Right ventricle myocardium inferior (tissue), 1 donor: ENCODE measurements at regions of chr14 and their contacts with region 1.

Region 1: DNA sequence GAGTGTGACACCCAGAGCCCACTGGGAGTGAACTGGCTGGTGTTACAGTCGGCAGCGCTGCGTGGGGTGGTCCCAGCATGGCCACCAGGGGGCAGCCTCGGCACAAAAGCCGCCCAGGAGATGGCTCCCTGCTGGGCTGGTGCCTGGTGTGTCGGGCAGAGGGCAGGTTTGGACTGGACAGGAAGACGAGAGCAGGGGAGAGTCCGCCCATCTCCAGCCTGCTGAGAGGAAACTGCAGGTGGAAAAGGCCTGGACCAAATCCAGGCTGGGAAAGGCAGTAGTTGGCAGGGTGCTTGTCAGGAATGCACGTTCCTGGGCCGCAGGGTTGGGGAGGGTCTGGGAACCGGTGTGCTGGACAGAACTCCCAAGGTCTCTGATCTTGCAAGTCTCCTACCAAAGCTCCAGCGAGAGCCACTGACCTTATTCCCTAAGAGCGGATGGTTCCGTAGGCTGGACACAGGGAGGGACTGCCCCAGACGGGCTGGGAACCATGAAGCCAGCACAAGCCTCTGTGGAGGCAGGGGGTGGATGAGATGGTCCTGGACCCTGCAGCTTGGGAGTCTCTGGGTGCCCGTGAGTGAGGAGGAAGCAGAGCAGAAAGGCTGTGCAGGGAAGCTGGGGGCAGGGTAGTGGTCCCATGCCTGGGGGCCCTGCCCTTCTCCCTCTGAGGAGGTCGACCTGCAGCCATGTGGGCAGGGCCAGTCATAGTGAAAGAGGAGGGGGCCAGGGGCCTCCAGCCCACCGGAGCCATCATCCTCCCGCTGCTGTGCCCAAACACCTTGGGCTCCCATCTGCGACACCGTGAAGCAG is 1.8 kb downstream of the AHNAK2 start:
- DNase-seq: peak; percentile 93
- ATAC-seq: peak; percentile 74

Region 2: DNA sequence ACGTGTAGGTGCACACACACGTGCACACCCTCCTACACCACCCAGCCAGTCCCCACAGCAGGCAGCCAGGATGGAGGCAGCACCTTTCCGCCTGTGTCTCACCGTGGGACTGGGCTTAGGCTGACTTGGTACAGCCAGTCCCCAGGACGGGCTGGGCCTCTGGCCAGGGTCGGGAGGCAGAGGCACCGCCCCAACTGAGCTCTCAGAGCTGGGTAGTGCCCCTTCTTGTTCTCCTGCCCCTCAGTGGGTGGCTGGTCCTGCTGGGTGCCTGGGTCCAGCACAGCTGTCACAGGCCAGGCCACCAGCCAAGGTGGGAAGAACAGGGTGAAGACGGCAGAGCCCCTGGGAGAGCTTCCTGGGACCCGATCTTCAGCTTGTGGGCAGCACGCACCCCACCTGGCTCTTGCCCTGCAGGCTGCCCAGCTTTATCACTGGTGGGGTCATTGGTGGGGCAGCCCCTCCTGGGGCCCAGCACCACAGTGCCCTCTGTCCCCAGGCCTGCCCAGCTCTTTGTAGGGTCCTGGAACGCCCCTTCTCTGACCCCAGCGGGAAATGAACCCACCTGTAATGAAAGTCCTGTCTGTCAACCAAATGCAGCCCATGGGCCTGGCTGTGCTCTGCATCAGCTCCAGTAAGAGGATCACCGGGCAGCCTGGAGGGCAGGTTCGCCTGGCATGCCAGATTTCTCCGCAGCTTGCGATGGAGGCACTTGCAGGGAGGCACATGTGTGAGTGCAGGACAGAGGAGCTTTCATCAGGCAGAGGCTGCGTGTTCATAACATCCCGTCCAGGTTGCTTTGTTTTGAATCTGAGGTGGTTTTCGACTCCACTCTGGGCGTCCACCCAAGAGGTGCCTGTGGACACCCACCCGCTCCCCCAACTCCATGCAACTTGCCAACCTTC is 29.8 kb after region 1 on chr14:
- intact Hi-C with region 1: no loop called
- DNase-seq: peak; percentile 53
- ATAC-seq: no peak

Region 3: DNA sequence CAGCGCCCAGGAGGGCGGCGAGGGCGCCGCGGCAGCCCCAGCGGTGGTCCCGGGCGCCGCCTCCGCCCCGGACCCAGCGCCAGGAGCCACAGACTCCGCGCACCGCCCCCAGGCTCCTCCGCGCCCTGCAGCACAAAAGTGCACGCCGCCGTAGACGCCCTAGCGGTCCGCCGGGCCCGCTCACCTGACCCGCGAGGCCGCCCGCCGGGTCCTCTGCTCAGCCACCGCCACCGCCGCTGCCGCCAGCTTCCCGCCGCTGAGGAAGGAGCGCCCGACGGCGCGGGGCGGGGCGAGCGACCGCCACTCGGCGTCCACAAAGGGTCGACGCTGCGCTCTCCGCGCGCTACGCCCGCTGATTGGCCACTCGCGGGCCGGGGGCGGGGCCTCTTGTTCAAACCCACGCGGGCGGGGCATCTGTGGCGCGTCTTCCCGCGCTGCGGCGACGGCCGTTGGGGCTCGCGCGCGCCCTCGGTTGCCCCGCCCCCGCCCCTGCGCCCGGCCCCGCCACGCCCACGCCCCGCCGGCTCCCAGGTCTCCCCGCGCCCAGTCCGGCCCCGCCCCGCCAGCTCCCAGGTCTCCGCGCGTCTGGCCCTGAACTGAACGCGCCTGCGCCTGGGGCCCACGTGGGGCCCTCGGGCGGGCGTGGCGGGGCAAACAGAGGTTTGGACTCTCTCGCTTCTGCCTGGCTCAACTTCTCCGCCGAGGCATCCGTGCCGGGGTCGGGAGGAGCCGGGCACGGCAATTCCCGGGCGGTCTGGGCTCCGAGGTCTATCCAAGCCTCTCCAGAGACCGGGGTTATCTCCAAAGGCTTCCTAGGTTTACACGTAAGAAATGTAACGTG is 44.6 kb after region 1 on chr14 and contains the start of gene CDCA4:
- intact Hi-C with region 1: loop called (anchors 2 kb)
- DNase-seq: peak; percentile 99
- ATAC-seq: peak; percentile 99
- total RNA-seq, gene CDCA4: 3.1 TPM

Region 4: DNA sequence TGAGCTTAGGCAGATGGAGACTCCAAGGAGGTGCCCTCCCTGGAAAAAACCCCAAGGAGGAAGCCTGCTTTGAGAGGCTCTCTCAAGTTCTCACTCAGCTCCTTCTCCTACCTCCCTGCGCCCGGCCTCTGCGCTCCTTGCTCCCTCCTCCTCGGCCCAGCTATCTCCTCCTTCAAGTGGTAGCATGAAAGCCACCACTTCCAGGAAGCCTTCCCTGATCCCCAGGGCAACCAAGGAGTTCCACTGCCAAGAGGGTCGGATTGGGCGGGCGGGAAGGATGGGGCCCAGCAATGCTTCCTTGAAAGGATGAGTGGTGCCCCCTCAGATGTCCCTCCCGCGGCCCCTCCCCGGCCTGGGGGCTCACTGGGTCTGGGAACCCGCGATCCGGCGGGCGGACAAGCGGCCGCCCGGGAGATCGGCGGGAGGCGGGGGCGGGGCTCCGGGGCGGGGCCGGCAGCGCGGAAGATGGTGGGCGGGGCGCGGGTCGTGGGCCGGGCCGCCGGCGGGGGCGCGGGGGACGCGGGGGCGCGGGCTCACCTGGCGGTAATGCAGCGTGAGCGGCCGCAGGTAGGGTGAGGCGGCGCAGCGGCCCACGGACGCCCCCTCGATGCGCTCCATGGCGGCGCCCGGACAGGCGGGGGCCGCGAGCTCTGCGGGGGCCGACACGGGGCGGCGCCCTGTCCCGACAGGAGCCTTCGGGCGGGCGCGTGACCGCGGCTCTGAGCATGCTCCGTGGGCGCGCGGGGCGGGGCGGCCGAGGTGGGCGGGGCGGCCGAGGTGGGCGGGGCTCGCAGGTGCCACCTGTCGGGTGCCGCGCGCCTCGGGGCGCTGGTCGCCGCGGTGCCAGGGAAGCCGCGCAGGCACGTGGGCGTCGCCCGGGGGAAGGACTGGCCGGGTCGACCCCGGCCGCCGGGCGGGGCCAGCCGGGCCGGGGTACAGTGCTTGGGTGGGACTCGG is 204.5 kb after region 1 on chr14 and contains the start of gene NUDT14:
- intact Hi-C with region 1: loop called (anchors 10 kb)
- DNase-seq: no peak
- ATAC-seq: peak; percentile 70
- total RNA-seq, gene NUDT14: 33.9 TPM